ENCODE measurements at regions of chr3 and their contacts with region 1.

Region 1: DNA sequence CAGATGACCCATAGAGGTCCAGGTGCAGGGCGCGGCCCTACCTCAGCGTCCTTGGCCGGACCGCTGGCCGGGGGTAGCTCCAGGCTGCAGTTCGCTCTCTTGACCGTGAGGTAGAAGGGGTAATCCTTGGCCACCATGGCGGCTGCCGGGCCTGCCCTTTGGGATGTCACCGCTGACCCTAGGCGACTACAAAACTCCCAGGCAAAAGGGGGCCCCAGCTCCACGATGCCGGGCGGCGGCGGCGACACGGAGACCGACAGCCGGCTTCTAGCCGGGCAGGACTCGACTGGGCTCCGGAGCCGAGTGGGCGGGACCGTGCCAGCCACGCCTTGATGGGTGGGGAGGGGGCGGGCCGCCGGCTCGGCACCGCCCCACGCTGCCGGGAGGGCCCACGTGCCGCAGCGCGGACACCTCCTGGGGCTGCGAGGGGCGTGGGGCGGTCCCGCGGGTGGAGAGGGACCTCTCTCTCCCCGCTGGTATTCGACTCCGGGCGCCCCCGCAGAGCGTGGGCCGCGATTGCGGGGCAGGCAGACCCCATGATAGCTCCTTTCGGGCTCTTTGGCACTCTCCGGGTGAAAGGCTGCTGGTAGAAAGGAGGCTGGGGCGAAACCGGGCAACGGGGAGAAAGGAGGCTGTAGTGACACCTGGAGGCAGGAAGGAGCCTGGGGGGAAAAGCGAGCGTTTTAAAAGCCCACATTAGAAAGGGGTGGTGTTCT is at the start of gene ARHGEF3:
- DNase-seq: peak; percentile 95
- ATAC-seq: peak; percentile 92
- H3K4me3 ChIP-seq: peak within 1 kb of the TSS; percentile 66 to 96 (median 72)
- H3K4me3 Mint-ChIP-seq: peak within 1 kb of the TSS; percentile 92
- H3K27ac ChIP-seq: peak within 1 kb of the TSS; percentile 35 to 53
- H3K27ac Mint-ChIP-seq: peak within 1 kb of the TSS; percentile 87
- H3K4me1 ChIP-seq: peaks cover 38 to 39% of the 10 kb centered on the region in 2 donors
- H3K4me1 Mint-ChIP-seq: peaks cover 48% of the 10 kb centered on the region
- H3K27me3 ChIP-seq: no peaks in the 10 kb centered on the region
- H3K27me3 Mint-ChIP-seq: no peaks in the 10 kb centered on the region
- CTCF ChIP-seq: peak; percentile 75
- total RNA-seq, gene ARHGEF3: 30.8 and 34.6 TPM in 2 replicates

Region 2: DNA sequence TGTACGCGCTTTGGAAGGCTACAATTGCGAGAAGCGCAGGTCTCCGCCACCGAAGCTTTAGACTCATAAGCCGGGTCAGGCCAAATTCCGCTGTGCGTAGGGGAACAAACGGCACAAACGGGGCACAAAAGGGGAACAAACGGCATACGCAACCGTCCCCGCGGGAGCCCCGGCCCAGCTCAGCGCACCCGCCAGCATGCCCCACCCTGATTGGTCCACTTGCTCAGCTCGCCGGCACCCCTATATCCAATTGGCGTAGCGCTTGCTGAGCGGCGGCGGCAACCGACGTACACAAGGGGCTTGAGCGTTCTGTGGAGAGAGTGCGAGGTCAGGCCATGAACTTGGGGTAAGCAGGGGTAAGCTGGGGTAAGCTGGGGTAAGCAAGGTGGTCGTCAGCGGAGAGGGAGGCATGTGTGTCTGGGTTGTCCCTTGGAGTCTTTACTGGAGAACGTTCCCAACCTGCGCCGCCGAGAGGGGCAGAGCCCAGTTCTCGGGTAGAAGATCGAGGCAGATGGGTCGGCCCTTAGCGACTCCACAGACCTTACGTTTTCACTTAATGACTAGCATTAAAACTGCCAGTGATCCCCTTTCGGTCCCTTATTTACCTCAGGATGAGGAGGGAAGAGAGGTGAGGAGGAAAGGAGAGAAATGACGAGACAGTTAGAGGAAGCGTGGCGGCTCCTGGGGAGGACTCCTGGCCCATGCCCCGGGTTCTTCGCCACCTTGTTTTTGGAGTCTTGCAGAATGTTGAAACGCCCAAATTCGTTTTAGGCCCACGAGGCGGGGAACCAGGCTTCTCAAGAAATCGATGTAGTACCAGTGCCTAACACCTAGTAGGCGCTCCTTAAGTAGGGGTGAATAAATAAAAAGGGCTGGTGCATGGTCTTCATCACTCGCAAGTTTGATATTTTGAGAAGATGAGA is 244.7 kb before region 1 on chr3 and contains the start of gene CCDC66:
- CTCF ChIA-PET with region 1: no interaction called
- POLR2A ChIA-PET with region 1: no interaction called
- intact Hi-C with region 1: loop called (anchors 2 kb)
- DNase-seq: peak; percentile 94
- ATAC-seq: peak; percentile 98
- H3K4me3 ChIP-seq: peak within 1 kb of the TSS; percentile 83 to 97 (median 91)
- H3K4me3 Mint-ChIP-seq: peak within 1 kb of the TSS; percentile 99
- H3K27ac ChIP-seq: peak within 1 kb of the TSS; percentile 87 to 91
- H3K27ac Mint-ChIP-seq: peak within 1 kb of the TSS; percentile 97
- H3K4me1 ChIP-seq: peaks cover 7 to 8% of the 10 kb centered on the region in 2 donors
- H3K4me1 Mint-ChIP-seq: peaks cover 19% of the 10 kb centered on the region
- H3K27me3 ChIP-seq: no peaks in the 10 kb centered on the region
- H3K27me3 Mint-ChIP-seq: no peaks in the 10 kb centered on the region
- CTCF ChIP-seq: peak; percentile 81
- total RNA-seq, gene CCDC66: 51.7 and 53.7 TPM in 2 replicates

Region 3: DNA sequence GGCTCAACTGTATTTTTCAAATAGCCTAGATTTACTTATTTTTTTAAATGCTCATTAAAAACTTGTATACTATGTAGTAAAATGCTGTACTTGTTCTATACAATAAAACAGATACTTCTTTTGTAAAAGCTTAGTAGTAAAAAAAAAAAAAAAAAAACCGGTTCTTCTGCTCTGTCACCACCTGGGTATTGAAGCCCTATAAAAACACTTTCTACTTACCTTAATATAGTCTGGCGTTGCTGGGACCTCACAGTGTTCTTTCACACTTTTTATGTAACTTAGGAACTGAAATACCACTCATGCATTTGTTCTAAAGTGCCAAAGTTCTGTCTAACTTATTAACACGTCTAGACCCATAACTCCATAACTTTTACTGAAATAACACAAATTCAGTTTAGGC is 180.1 kb before region 1 on chr3:
- CTCF ChIA-PET with region 1: no interaction called
- POLR2A ChIA-PET with region 1: no interaction called
- intact Hi-C with region 1: no loop called
- DNase-seq: no peak
- ATAC-seq: no peak
- H3K4me3 ChIP-seq: no peak overlapping the region
- H3K4me3 Mint-ChIP-seq: no peak overlapping the region
- H3K27ac ChIP-seq: no peak overlapping the region
- H3K27ac Mint-ChIP-seq: no peak overlapping the region
- H3K4me1 ChIP-seq: no peaks in the 10 kb centered on the region
- H3K4me1 Mint-ChIP-seq: no peaks in the 10 kb centered on the region
- H3K27me3 ChIP-seq: no peaks in the 10 kb centered on the region
- H3K27me3 Mint-ChIP-seq: no peaks in the 10 kb centered on the region
- CTCF ChIP-seq: no peak

Region 4: GRCh38 chr3:56711344-56711743 is 90.5 kb before region 1 on chr3:
- CTCF ChIA-PET with region 1: interaction called, 420 read pairs
- POLR2A ChIA-PET with region 1: no interaction called
- intact Hi-C with region 1: no loop called
- DNase-seq: no peak
- ATAC-seq: no peak
- H3K4me3 ChIP-seq: no peak overlapping the region
- H3K4me3 Mint-ChIP-seq: no peak overlapping the region
- H3K27ac ChIP-seq: no peak overlapping the region
- H3K27ac Mint-ChIP-seq: no peak overlapping the region
- H3K4me1 ChIP-seq: no peaks in the 10 kb centered on the region
- H3K4me1 Mint-ChIP-seq: no peaks in the 10 kb centered on the region
- H3K27me3 ChIP-seq: no peaks in the 10 kb centered on the region
- H3K27me3 Mint-ChIP-seq: no peaks in the 10 kb centered on the region
- CTCF ChIP-seq: no peak

Region 5: DNA sequence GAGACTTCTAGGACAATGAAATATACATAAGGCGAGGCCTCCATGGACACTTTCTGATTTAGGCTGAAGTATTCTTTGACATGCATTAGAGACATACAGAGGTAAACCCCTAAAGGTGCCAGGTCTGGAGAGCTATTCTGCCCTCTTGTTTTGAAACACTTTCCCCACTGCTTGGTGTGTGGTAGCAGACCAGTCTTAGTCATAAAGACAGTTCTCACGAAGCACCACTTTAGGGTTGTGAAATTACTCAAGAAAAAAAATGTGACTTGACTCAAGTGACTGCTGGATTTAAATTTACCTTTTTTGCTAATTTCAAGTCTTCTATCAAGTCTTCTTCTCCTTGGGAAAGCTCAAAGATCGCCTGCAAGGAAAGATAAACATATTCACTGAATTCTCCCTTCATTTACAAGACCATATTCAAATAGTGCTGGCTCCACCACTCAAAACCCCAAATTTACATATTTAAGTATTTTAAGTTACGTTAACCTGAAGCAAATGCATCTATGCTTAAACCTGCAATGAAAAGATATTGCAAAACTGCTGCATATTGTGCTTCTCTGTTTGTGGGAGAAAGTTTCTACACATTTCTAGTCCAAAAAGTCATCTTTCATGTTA is 48.5 kb before region 1 on chr3:
- CTCF ChIA-PET with region 1: interaction called, 176 read pairs
- POLR2A ChIA-PET with region 1: interaction called, 33 read pairs
- intact Hi-C with region 1: loop called (anchors 1 kb)
- DNase-seq: peak; percentile 5
- ATAC-seq: no peak
- H3K4me3 ChIP-seq: peak overlapping the region in 2 of 5 experiments; percentile 72 to 86
- H3K4me3 Mint-ChIP-seq: peak overlapping the region; percentile 95
- H3K27ac ChIP-seq: peak overlapping the region; percentile 85 to 87
- H3K27ac Mint-ChIP-seq: peak overlapping the region; percentile 95
- H3K4me1 ChIP-seq: peaks cover 41 to 53% of the 10 kb centered on the region in 2 donors
- H3K4me1 Mint-ChIP-seq: peaks cover 58% of the 10 kb centered on the region
- H3K27me3 ChIP-seq: no peaks in the 10 kb centered on the region
- H3K27me3 Mint-ChIP-seq: no peaks in the 10 kb centered on the region
- CTCF ChIP-seq: no peak

Region 6: DNA sequence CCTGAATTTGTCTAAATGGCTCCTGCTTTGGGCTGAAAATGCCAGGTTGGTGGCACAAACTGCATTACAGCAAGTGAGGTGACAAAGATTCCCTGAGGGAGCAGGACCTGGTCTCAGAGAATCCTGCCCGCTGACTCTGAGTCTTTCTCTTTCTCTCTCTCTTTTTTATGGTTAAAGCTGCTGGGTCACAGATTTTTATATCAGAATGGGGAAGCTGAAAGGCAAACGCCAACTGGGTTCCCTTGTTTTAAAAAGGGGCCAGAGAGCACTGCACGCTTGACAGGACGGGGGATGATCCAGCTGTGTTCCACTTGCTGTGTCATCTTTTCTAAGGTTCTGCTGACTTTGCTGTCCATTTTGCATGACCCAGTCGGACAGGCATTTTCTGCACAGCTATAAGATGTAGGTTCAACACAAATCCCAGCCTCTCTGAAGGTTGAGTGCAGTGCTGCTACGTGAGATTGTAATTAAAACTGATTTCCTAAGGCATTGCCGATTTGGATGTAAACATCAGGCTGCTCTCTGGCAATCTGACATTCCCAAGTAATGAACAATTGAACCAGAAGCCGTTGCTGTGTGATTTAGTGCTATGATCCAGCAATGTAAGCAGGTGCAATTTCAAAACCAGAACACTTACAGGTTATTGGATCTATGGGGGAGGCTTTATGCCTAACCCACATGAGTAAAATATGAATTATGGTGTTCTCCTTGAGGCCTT is 25.8 kb before region 1 on chr3:
- CTCF ChIA-PET with region 1: interaction called, 190 read pairs
- POLR2A ChIA-PET with region 1: interaction called, 4 read pairs
- intact Hi-C with region 1: no loop called
- DNase-seq: no peak
- ATAC-seq: peak; percentile 14
- H3K4me3 ChIP-seq: no peak overlapping the region
- H3K4me3 Mint-ChIP-seq: no peak overlapping the region
- H3K27ac ChIP-seq: no peak overlapping the region
- H3K27ac Mint-ChIP-seq: peak overlapping the region; percentile 75
- H3K4me1 ChIP-seq: peaks cover 20 to 36% of the 10 kb centered on the region in 2 donors
- H3K4me1 Mint-ChIP-seq: peaks cover 48% of the 10 kb centered on the region
- H3K27me3 ChIP-seq: no peaks in the 10 kb centered on the region
- H3K27me3 Mint-ChIP-seq: no peaks in the 10 kb centered on the region
- CTCF ChIP-seq: no peak

Region 7: GRCh38 chr3:56923521-56924224 is 121.9 kb after region 1 on chr3:
- CTCF ChIA-PET with region 1: interaction called, 12 read pairs
- POLR2A ChIA-PET with region 1: no interaction called
- intact Hi-C with region 1: no loop called
- DNase-seq: peak; percentile 50
- ATAC-seq: peak; percentile 45
- H3K4me3 ChIP-seq: peak overlapping the region in 1 of 5 experiments; percentile 22
- H3K4me3 Mint-ChIP-seq: peak overlapping the region; percentile 64
- H3K27ac ChIP-seq: peak overlapping the region; percentile 35 to 47
- H3K27ac Mint-ChIP-seq: peak overlapping the region; percentile 54
- H3K4me1 ChIP-seq: peaks cover 35 to 40% of the 10 kb centered on the region in 2 donors
- H3K4me1 Mint-ChIP-seq: peaks cover 46% of the 10 kb centered on the region
- H3K27me3 ChIP-seq: no peaks in the 10 kb centered on the region
- H3K27me3 Mint-ChIP-seq: no peaks in the 10 kb centered on the region
- CTCF ChIP-seq: no peak

Region 8: DNA sequence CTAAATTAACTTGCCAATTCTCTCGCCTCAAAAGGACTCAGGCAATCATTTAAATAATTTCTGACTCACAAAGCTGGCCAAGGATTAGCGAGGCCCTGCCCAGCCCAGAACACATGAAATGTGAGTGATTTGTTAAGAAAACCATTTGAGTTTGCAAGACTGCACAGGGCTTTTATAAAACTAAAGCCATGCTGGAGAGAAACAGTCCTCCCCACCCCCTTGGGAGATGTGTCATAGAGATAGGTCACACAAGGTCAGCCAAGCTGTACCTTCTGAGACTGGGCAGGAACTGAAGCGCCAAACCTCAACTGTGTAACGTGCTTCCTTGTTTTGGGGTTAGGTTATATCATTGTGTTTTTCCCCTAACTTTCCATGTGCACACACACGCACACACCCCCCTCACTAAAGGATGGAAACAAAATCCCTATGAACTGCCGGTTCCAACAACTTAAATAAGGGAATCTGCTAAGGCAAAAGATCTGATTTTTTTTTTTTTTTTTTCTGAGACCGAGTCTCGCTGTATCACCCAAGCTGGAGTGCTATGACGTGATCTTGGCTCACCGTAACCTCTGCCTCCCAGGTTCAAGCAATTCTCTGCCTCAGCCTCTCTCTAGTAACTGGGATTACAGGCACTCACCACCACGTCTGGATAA is 266.7 kb after region 1 on chr3:
- CTCF ChIA-PET with region 1: interaction called, 3 read pairs
- POLR2A ChIA-PET with region 1: no interaction called
- intact Hi-C with region 1: loop called (anchors 5 kb)
- DNase-seq: peak; percentile 92
- ATAC-seq: peak; percentile 99
- H3K4me3 ChIP-seq: peak overlapping the region in 1 of 5 experiments; percentile 34
- H3K4me3 Mint-ChIP-seq: peak overlapping the region; percentile 74
- H3K27ac ChIP-seq: peak overlapping the region in 1 of 2 donors; percentile 21
- H3K27ac Mint-ChIP-seq: peak overlapping the region; percentile 80
- H3K4me1 ChIP-seq: peaks cover 18 to 22% of the 10 kb centered on the region in 2 donors
- H3K4me1 Mint-ChIP-seq: peaks cover 21% of the 10 kb centered on the region
- H3K27me3 ChIP-seq: peaks cover 0 to 46% (median 21%) of the 10 kb centered on the region in 4 experiments
- H3K27me3 Mint-ChIP-seq: peaks cover 42% of the 10 kb centered on the region
- CTCF ChIP-seq: no peak

Region 9: DNA sequence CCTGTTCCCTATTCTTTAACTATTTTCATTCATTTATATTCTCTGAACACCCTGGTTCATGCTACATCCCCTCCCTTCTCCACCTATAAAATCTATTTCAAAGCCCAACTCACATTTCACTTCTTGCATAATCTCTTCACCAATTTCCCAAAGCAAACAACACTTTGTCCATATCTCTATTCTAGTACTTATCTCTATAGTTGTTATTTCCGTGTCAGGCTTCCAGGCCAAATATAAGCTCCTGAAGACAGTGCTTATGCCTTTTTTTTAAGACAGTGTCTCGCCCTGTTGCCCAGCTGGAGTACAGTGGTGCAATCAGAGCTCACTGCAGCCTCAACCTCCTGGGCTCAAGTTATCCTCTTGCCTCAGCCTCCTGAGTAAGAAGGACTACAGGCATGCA is 698.7 kb after region 1 on chr3:
- CTCF ChIA-PET with region 1: no interaction called
- POLR2A ChIA-PET with region 1: no interaction called
- intact Hi-C with region 1: no loop called
- DNase-seq: no peak
- ATAC-seq: no peak
- H3K4me3 ChIP-seq: no peak overlapping the region
- H3K4me3 Mint-ChIP-seq: no peak overlapping the region
- H3K27ac ChIP-seq: no peak overlapping the region
- H3K27ac Mint-ChIP-seq: no peak overlapping the region
- H3K4me1 ChIP-seq: no peaks in the 10 kb centered on the region
- H3K4me1 Mint-ChIP-seq: no peaks in the 10 kb centered on the region
- H3K27me3 ChIP-seq: no peaks in the 10 kb centered on the region
- H3K27me3 Mint-ChIP-seq: peaks cover 9% of the 10 kb centered on the region
- CTCF ChIP-seq: no peak

Measured in B cell (primary cell).